ENCODE measurements at regions of chr14 and their contacts with region 1.

Region 1: GRCh38 chr14:76352639-76353281 is 23.2 kb upstream of the ESRRB start:
- DNase-seq: peak; percentile 36 to 97
- H3K4me3 ChIP-seq: peak overlapping the region in 1 of 4 experiments; percentile 26; a peak in 1 of 8 replicates
- H3K27ac ChIP-seq: no peak overlapping the region
- H3K4me1 ChIP-seq: peaks cover 0 to 6% (median 3%) of the 10 kb centered on the region in 4 experiments; a peak in 4 of 7 replicates
- H3K27me3 ChIP-seq: peaks cover 2 to 7% (median 5%) of the 10 kb centered on the region in 4 experiments; a peak in 5 of 7 replicates
- CTCF ChIP-seq: peak; percentile 85 to 96 (median 89)
- EP300 ChIP-seq: no peak
- POLR2A ChIP-seq: no peak
- RAD21 ChIP-seq: peak; percentile 89 to 94

Region 2: DNA sequence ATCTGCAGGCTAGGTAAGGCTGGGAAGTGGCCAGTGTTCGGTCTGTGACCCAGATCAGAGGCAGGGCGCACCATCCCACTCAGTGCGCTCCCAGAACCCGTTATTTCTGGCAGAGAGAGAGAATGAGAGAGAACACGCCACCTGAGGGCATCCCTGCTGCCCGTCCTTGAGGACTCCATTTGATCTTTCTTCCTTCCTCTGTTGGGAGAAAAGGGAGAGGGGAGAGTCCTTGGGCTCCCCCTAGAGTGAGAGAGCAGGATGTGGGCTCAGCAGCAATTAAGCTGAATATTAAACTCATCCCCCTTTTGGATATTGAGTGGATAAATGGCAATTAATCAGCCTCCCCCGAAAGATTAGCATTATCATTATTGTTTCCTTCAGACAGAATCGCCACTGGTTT is 296.6 kb before region 1 on chr14:
- CTCF ChIA-PET with region 1: interaction called, 32 read pairs
- POLR2A ChIA-PET with region 1: no interaction called
- DNase-seq: no peak
- H3K4me3 ChIP-seq: no peak overlapping the region
- H3K27ac ChIP-seq: no peak overlapping the region
- H3K4me1 ChIP-seq: peaks cover 0 to 8% (median 5%) of the 10 kb centered on the region in 4 experiments
- H3K27me3 ChIP-seq: no peaks in the 10 kb centered on the region
- CTCF ChIP-seq: peak; percentile 54 to 72 (median 63)
- EP300 ChIP-seq: no peak
- POLR2A ChIP-seq: no peak
- RAD21 ChIP-seq: peak; percentile 48 to 65; a peak in 3 of 4 replicates

Region 3: DNA sequence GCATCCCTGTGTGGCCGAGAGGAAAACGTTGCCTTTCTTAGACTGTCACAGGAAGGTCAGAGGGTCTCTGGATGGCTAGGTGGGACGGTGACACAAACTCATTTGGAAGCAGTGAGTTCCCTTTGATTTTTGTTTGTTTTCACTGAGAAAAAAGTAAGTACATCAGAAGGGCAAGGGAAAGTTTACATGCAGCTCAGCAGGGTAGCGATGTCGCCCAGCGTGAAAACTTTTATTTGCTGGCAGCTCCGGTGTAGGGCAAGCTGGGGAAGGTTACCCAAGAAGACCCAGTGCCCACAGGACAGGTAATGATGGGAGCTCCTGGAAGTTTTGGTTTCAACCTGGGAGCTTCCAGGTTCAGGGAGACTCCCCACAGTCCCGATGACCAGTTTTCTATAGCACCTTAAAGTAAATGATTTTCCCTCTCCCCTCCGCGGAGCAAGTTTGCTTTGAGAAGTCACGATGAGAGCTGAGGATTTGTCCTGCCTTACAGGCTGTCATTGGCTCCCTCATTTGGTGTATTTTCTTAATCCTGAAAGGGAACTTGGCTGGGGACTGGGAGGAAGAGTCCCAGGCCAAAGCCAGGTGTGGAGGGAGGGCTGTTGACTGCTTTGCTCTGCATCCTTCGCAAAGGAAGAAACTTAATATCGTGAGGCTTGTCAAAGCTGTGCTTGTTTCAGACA is 41.5 kb before region 1 on chr14:
- CTCF ChIA-PET with region 1: interaction called, 11 read pairs
- POLR2A ChIA-PET with region 1: no interaction called
- DNase-seq: peak in 1 of 2 experiments; percentile 53
- H3K4me3 ChIP-seq: peak overlapping the region; percentile 16 to 50 (median 32); a peak in 7 of 8 replicates
- H3K27ac ChIP-seq: no peak overlapping the region
- H3K4me1 ChIP-seq: peaks cover 11 to 35% (median 19%) of the 10 kb centered on the region in 4 experiments
- H3K27me3 ChIP-seq: peaks cover 4 to 51% (median 34%) of the 10 kb centered on the region in 4 experiments
- CTCF ChIP-seq: no peak
- EP300 ChIP-seq: no peak
- POLR2A ChIP-seq: no peak
- RAD21 ChIP-seq: no peak

Region 4: DNA sequence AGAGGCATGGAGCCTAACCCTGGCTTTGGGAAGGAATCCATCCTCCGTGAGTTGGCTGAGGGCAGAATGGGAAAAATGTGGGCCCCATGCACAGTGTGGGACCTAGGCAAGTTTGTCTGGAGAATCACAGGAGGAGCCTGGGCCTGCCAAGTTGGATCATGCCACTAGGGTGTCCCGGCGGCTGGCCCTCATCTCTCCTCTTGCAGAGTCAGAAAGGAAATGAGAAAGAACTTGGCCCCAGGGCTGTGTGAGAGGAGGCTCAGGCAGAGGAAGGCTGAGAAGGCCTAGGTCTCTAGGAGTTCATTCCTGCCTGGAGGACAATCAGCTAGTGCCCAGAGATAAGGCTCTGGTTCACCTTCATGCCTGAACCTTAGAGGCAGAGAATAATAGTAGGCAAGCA is 20.7 kb after region 1 on chr14:
- CTCF ChIA-PET with region 1: interaction called, 14 read pairs
- POLR2A ChIA-PET with region 1: no interaction called
- DNase-seq: no peak
- H3K4me3 ChIP-seq: no peak overlapping the region
- H3K27ac ChIP-seq: no peak overlapping the region
- H3K4me1 ChIP-seq: peaks cover 0 to 5% (median 3%) of the 10 kb centered on the region in 4 experiments; a peak in 3 of 7 replicates
- H3K27me3 ChIP-seq: peaks cover 24 to 45% (median 42%) of the 10 kb centered on the region in 4 experiments
- CTCF ChIP-seq: peak in 2 of 3 experiments; percentile 2 to 31; a peak in 1 of 4 replicates
- EP300 ChIP-seq: no peak
- POLR2A ChIP-seq: no peak
- RAD21 ChIP-seq: peak; percentile 10 to 20; a peak in 2 of 4 replicates

Region 5: DNA sequence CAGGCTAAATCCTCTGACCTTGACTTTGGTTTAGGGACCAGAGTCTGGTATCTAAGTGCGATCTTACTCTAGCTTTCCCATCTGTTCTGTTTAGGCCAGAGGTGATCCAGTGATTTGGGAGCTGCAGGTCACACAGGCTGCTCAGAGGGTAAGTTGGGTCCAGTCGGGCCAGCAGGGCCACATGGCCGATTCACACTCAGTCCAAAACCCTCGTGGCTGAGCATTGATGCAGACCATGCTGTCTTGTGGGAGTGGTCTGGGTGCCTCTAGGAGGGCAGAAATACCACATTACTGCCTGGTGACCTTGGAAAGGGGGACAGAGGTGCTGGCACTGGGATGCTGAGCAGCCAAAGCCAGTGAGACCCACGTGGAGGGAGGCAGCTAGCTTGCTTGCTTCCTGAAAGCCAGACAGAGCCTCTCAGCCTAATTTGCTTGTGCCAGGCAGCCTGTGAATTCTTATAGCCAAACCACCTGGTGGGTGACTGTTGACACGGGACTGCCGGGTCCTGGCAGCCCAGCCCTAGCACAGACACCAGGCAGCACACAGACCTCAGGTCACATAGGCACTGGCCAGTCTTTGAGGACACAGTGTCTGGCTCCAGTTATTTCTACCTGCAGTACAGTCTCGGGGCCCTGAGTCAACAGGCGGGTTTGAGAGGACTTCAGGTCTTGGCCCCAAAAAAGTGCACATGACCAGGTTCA is 54.8 kb after region 1 on chr14:
- CTCF ChIA-PET with region 1: no interaction called
- POLR2A ChIA-PET with region 1: no interaction called
- DNase-seq: no peak
- H3K4me3 ChIP-seq: no peak overlapping the region
- H3K27ac ChIP-seq: no peak overlapping the region
- H3K4me1 ChIP-seq: peaks cover 0 to 11% (median 6%) of the 10 kb centered on the region in 4 experiments; a peak in 6 of 7 replicates
- H3K27me3 ChIP-seq: no peaks in the 10 kb centered on the region
- CTCF ChIP-seq: no peak
- EP300 ChIP-seq: no peak
- POLR2A ChIP-seq: no peak
- RAD21 ChIP-seq: no peak

Measured in H1 (cell line).